Heart left ventricle (tissue), 16 donors: ENCODE measurements at regions of chr11 and their contacts with region 1.

Region 1: DNA sequence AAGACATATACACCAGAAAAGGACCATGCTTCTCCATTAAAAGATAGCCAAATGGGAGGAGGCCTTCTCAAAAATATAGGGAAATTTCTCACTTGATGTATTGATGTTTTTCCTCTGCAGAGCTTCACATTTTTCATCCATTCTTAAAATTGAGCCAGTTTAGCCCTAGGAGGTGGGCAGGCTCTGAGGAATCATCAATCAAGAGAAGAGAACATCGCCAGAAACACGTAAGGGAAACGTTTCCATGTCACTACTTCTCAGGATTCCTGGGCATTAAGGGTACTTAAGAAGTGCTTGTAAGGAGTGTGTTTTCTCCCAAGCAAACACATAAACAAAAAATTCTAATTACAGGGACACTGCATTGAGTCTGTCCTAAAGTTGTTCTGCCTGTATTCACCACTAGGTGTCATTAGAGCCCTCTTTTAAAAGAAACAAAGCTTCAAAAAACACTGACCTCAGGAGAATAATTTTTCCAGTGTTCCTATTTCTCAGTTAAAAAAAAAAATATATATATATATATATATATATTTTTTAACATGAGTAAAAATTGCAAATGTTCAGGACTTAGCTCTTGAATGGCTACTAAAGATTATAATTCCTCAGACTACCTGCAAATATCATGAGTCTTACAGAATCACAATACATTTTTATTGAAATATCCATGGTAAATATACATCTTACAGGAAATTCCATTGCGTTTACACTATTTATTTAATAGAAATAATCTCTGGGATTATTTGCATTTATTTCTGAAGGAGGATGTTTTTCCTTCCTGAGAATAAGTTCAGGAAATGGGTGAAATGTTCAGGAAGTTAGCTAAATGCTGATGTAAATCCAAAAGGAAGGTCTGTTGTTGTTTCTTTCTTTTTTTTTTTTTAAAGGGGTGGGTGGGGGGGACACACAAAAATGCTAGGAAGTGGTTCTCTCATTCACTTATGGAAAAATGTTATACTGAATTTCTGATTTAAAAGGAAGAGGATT is 16.0 kb downstream of the FZD4 start:
- DNase-seq: no peak
- ATAC-seq: peak in 2 of 4 donors; percentile 34 to 37
- H3K4me3 ChIP-seq: peak overlapping the region in 5 of 12 donors; percentile 20 to 43 (median 31)
- H3K27ac ChIP-seq: peak overlapping the region; percentile 68 to 86 (median 82)
- H3K4me1 ChIP-seq: peaks cover 0 to 80% (median 53%) of the 10 kb centered on the region in 12 donors
- H3K27me3 ChIP-seq: no peaks in the 10 kb centered on the region
- CTCF ChIP-seq: peak; percentile 62 to 75 (median 70)
- POLR2A ChIP-seq: no peak

Region 2: DNA sequence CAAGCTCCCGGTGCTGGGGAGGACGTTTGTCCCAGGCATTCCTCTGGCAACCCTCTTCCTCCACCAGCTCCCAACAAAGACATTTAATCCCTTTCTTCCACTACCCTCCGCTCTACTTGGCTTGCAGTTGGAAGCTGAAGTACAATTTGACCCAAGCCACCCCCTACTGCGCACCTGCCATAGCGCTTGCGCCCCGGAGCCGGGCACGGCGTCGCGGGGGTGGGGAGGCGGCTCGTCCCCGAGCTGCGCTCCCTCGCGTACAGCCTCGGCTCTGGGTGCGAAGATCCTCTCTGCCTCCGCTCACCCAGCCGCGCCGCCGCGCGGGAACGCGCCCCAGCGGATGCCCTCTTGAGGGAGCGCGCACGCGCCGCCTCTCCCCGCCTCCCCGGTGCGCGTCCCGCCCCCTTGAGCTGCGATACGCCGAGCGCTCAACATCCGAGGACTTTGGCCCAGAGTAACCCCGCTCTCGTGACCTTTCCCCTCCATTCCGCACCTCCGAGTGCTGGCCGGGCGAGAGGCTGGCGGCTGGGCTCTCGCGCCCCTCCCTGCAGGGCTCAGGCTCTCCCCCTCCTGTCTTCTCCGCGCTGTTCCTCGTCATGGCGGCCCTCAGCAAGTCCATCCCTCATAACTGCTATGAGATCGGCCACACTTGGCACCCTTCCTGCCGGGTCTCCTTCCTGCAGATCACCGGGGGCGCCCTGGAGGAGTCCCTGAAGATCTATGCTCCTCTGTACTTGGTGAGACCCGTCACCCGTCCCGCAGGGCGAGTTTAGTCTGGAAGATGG is 98.5 kb after region 1 on chr11 and contains the start of gene TMEM135:
- intact Hi-C with region 1: loop called in 2 of 10 experiments (anchors 1 to 10 kb)
- DNase-seq: peak; percentile 95 to 97 (median 97)
- ATAC-seq: peak; percentile 99
- H3K4me3 ChIP-seq: peak within 1 kb of the TSS; percentile 39 to 94 (median 87)
- H3K27ac ChIP-seq: peak within 1 kb of the TSS; percentile 82 to 96 (median 88)
- H3K4me1 ChIP-seq: peaks cover 0 to 52% (median 32%) of the 10 kb centered on the region in 12 donors
- H3K27me3 ChIP-seq: no peaks in the 10 kb centered on the region
- CTCF ChIP-seq: peak in 2 of 12 donors; percentile 16 to 38
- POLR2A ChIP-seq: peak in 1 of 2 donors; percentile 84
- total RNA-seq, gene TMEM135: 11.6 to 22.7 (median 15.0) TPM

Region 3: GRCh38 chr11:87097582-87097981 is 158.4 kb after region 1 on chr11:
- intact Hi-C with region 1: loop called in 1 of 10 experiments (anchors 10 kb)
- DNase-seq: peak in 3 of 5 donors; percentile 25 to 34 (median 26)
- ATAC-seq: peak; percentile 68 to 84 (median 76)
- H3K4me3 ChIP-seq: no peak overlapping the region
- H3K27ac ChIP-seq: no peak overlapping the region
- H3K4me1 ChIP-seq: peaks cover 0 to 9% (median 0%) of the 10 kb centered on the region in 12 donors
- H3K27me3 ChIP-seq: no peaks in the 10 kb centered on the region
- CTCF ChIP-seq: peak; percentile 43 to 76 (median 64)
- POLR2A ChIP-seq: no peak

Region 4: DNA sequence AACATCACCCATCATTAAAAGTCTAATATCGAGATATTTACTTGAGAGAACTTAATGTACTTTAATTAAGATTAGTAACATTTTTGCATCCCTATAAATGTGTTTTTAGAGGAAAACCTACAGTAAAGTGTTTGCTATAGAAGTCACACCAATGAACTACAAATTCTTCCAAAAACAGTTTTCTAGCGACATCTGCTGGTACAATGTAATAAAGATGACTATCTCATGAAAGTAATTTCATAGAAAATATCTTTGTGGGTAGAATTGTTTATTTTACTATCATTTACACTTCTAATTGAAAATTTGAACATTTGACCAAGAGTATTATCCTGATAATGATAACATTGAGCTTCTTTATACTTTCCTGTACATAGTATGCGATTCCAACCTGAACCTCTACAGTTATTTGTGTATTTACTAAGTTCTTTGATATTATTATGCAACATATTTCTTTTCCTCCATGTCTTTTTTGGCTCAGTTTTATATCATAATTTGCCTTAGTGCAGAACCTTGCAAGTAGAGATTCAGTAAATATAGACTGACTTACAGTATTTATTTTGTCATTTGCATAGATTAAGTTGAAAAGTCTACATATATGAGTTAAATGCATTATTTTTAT is 351.2 kb after region 1 on chr11:
- intact Hi-C with region 1: loop called in 9 of 10 experiments (anchors 1 to 5 kb)
- DNase-seq: no peak
- ATAC-seq: no peak
- H3K4me3 ChIP-seq: no peak overlapping the region
- H3K27ac ChIP-seq: no peak overlapping the region
- H3K4me1 ChIP-seq: peaks cover 0 to 7% (median 0%) of the 10 kb centered on the region in 12 donors
- H3K27me3 ChIP-seq: no peaks in the 10 kb centered on the region
- CTCF ChIP-seq: peak; percentile 54 to 80 (median 70)
- POLR2A ChIP-seq: no peak

Region 5: GRCh38 chr11:87421422-87421821 is 482.2 kb after region 1 on chr11:
- intact Hi-C with region 1: loop called in 9 of 10 experiments (anchors 2 to 10 kb)
- DNase-seq: peak in 3 of 5 donors; percentile 22 to 42 (median 32)
- ATAC-seq: peak; percentile 56 to 91 (median 86)
- H3K4me3 ChIP-seq: no peak overlapping the region
- H3K27ac ChIP-seq: no peak overlapping the region
- H3K4me1 ChIP-seq: peaks cover 0 to 22% (median 9%) of the 10 kb centered on the region in 12 donors
- H3K27me3 ChIP-seq: no peaks in the 10 kb centered on the region
- CTCF ChIP-seq: peak; percentile 73 to 90 (median 85)
- POLR2A ChIP-seq: no peak